CD4-positive, alpha-beta memory T cell (primary cell): ENCODE measurements at regions of chr3 and their contacts with region 1.

Region 1: GRCh38 chr3:9396700-9397521 is 504 bp upstream of the SETD5 start:
- DNase-seq: peak; percentile 99 to 100 (median 100)
- H3K4me3 ChIP-seq: peak overlapping the region in 1 of 2 donors; percentile 71
- H3K4me3 Mint-ChIP-seq: peak overlapping the region; percentile 90 to 99 (median 96)
- H3K27ac ChIP-seq: peak overlapping the region; percentile 83
- H3K27ac Mint-ChIP-seq: peak overlapping the region; percentile 96 to 99 (median 99)
- H3K4me1 ChIP-seq: peaks cover 73% of the 10 kb centered on the region
- H3K4me1 Mint-ChIP-seq: peaks cover 49 to 87% (median 68%) of the 10 kb centered on the region in 4 donors
- H3K27me3 ChIP-seq: no peaks in the 10 kb centered on the region
- H3K27me3 Mint-ChIP-seq: peaks cover 0 to 3% of the 10 kb centered on the region in 2 donors

Region 2: DNA sequence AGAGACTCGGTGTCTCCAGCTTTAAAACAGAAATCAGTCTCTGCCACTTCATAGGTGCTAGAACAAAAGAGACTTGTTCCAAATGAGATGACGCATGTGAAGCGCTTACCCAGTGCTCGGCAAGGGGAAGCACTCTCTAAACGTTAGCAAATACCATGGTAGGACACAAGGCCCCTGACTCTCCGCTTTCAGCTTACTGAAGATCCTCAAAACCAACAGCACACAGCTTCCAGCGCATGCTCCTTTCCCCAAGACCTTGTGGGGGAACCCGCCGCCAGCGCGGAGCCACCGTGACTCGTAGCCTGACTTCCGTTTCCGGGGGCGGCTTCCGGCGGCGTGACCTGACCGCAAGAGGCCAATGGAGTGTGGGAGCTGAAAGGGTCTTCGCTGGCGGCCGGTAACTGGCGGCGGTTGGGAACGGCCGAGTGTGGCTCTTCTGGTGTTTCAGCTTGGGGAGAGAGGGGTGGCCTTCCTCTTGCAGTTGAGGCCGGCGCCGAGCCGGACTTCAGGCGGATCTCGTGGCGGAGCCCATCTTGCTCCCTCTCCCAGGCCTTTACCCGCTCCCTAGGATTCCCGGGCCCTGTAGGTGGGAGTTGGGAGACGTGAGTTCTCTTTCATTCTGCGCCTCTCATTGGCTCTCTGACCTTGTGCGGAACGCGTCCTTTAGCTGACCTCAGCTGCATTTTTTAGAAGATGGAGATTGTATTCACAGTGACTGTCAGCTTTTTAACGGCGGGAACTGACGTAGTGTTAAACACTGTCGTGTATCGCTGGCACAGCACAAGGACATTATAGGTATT is 34.0 kb before region 1 on chr3 and contains the start of gene THUMPD3:
- CTCF ChIA-PET with region 1: interaction called, 9 read pairs
- POLR2A ChIA-PET with region 1: interaction called, 158 read pairs
- intact Hi-C with region 1: loop called (anchors 1 kb)
- DNase-seq: peak; percentile 82 to 91 (median 85)
- H3K4me3 ChIP-seq: peak within 1 kb of the TSS; percentile 92 to 96
- H3K4me3 Mint-ChIP-seq: peak within 1 kb of the TSS; percentile 95 to 99 (median 98)
- H3K27ac ChIP-seq: peak within 1 kb of the TSS; percentile 91
- H3K27ac Mint-ChIP-seq: peak within 1 kb of the TSS; percentile 95 to 99 (median 98)
- H3K4me1 ChIP-seq: peaks cover 22% of the 10 kb centered on the region
- H3K4me1 Mint-ChIP-seq: peaks cover 7 to 38% (median 17%) of the 10 kb centered on the region in 4 donors
- H3K27me3 ChIP-seq: no peaks in the 10 kb centered on the region
- H3K27me3 Mint-ChIP-seq: no peaks in the 10 kb centered on the region
- total RNA-seq, gene THUMPD3: 36.9 to 39.2 TPM

Region 3: GRCh38 chr3:9422712-9423424 is 26.0 kb after region 1 on chr3:
- CTCF ChIA-PET with region 1: interaction called, 3 read pairs
- POLR2A ChIA-PET with region 1: interaction called, 14 read pairs
- intact Hi-C with region 1: loop called (anchors 2 kb)
- DNase-seq: peak; percentile 31 to 46 (median 35)
- H3K4me3 ChIP-seq: no peak overlapping the region
- H3K4me3 Mint-ChIP-seq: peak overlapping the region in 2 of 8 donors; percentile 0 to 59
- H3K27ac ChIP-seq: peak overlapping the region; percentile 1
- H3K27ac Mint-ChIP-seq: peak overlapping the region; percentile 33 to 93 (median 74)
- H3K4me1 ChIP-seq: peaks cover 22% of the 10 kb centered on the region
- H3K4me1 Mint-ChIP-seq: peaks cover 26 to 37% (median 34%) of the 10 kb centered on the region in 4 donors
- H3K27me3 ChIP-seq: no peaks in the 10 kb centered on the region
- H3K27me3 Mint-ChIP-seq: no peaks in the 10 kb centered on the region

Region 4: GRCh38 chr3:9749645-9750555 is 353.0 kb after region 1 on chr3 and contains the start of gene OGG1:
- CTCF ChIA-PET with region 1: no interaction called
- POLR2A ChIA-PET with region 1: interaction called, 8 read pairs
- intact Hi-C with region 1: loop called (anchors 1 kb)
- DNase-seq: peak; percentile 95 to 98 (median 96)
- H3K4me3 ChIP-seq: peak within 1 kb of the TSS; percentile 58 to 92
- H3K4me3 Mint-ChIP-seq: peak within 1 kb of the TSS; percentile 88 to 98 (median 96)
- H3K27ac ChIP-seq: peak within 1 kb of the TSS; percentile 59
- H3K27ac Mint-ChIP-seq: peak within 1 kb of the TSS; percentile 93 to 98 (median 95)
- H3K4me1 ChIP-seq: peaks cover 38% of the 10 kb centered on the region
- H3K4me1 Mint-ChIP-seq: peaks cover 25 to 54% (median 39%) of the 10 kb centered on the region in 4 donors
- H3K27me3 ChIP-seq: no peaks in the 10 kb centered on the region
- H3K27me3 Mint-ChIP-seq: no peaks in the 10 kb centered on the region
- total RNA-seq, gene OGG1: 40.4 to 46.9 TPM

Region 5: DNA sequence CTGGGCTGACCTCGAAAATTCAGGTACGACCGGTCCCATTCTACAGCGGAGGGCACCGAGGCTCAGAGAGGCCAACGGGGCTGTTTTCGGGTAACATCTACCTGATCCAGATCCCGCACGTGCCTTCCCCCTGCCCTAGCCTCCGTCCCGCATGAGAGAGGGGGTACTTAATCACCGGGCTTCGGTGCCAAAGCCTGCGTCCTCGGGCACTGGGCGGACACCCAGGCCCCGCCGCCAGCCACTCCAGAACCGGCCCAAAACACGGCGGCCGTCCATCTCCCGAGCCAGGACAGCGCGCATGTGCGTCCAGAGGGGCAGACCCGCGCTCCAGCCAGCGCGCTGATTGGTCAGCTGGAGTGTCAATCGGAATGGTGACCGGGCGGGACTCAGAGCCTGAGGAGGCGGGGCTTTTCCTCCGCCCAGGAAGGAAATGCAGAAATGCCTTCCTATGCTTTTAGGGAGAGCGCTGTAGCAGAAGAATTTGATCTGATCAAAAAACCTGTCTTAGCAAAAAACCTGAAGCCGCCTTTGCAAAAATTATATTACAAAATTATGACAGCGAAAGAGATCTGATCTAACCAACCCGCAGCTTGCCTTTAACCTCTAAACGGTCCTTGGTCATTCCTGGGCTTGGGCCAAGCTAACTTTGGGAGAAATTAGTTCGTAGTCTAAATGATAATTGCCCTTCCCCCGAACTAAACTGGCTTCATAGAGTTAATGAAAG is 447.0 kb after region 1 on chr3 and contains the start of gene RPUSD3:
- CTCF ChIA-PET with region 1: no interaction called
- POLR2A ChIA-PET with region 1: interaction called, 5 read pairs
- intact Hi-C with region 1: loop called (anchors 5 kb)
- DNase-seq: peak; percentile 92 to 98 (median 93)
- H3K4me3 ChIP-seq: peak within 1 kb of the TSS; percentile 80 to 92
- H3K4me3 Mint-ChIP-seq: peak within 1 kb of the TSS; percentile 96 to 99 (median 97)
- H3K27ac ChIP-seq: peak within 1 kb of the TSS; percentile 65
- H3K27ac Mint-ChIP-seq: peak within 1 kb of the TSS; percentile 87 to 97 (median 92)
- H3K4me1 ChIP-seq: peaks cover 23% of the 10 kb centered on the region
- H3K4me1 Mint-ChIP-seq: peaks cover 10 to 36% (median 21%) of the 10 kb centered on the region in 4 donors
- H3K27me3 ChIP-seq: no peaks in the 10 kb centered on the region
- H3K27me3 Mint-ChIP-seq: no peaks in the 10 kb centered on the region
- total RNA-seq, gene RPUSD3: 63.3 to 67.6 TPM

Region 6: DNA sequence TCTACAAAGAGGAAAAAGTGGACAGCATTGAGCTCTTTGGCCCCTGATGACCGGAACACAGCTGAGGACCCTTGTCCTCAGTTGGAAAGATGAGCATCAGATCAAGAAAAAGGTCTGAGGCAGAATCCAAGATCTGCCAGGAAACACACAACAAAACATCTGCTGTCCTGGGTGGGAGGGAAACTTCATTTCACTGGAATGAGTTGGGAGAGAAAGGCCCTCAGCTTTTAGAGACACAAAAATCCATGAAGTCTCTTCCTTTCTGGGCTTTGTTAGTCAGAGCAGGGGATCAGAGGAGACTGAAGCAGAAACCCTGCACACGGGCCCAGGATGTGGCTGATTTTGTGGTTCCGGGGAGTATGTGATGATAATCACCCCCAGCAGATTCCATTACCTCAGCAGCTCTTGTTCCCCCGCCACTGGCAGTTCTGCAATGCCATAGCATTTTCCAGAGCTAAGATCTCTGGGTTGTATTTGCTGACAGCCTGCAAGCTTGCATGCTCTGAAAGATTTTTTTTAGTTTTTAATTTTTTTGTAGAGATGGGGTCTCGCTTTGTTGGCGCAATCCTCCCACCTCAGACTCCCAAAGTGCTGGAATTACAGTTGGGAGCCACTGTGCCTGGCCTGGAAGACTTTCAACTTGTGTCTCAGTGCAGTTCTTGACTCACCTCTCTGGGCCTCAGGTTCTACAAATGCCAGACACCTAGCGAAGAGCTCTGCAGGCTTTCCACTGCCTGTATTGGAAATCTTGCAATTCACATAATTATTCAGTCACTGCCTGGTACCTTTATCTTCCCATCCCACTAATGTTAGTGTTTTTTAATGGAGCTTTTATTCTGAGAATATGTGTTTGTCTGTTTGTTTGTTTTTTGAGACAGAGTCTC is 845.5 kb after region 1 on chr3:
- CTCF ChIA-PET with region 1: no interaction called
- POLR2A ChIA-PET with region 1: no interaction called
- intact Hi-C with region 1: loop called (anchors 5 kb)
- DNase-seq: peak; percentile 80 to 94 (median 83)
- H3K4me3 ChIP-seq: peak overlapping the region; percentile 34 to 36
- H3K4me3 Mint-ChIP-seq: peak overlapping the region; percentile 77 to 90 (median 80)
- H3K27ac ChIP-seq: peak overlapping the region; percentile 47
- H3K27ac Mint-ChIP-seq: peak overlapping the region; percentile 89 to 97 (median 95)
- H3K4me1 ChIP-seq: peaks cover 54% of the 10 kb centered on the region
- H3K4me1 Mint-ChIP-seq: peaks cover 37 to 67% (median 53%) of the 10 kb centered on the region in 4 donors
- H3K27me3 ChIP-seq: no peaks in the 10 kb centered on the region
- H3K27me3 Mint-ChIP-seq: no peaks in the 10 kb centered on the region